ENCODE measurements at regions of chr14 and their contacts with region 1.

Region 1: GRCh38 chr14:103104654-103105452 is 10.3 kb downstream of the EXOC3L4 start:
- DNase-seq: peak; percentile 85 to 89
- H3K4me3 ChIP-seq: peak overlapping the region in 2 of 4 donors; percentile 7 to 49
- H3K27ac ChIP-seq: peak overlapping the region in 2 of 5 donors; percentile 31 to 33
- H3K4me1 ChIP-seq: peaks cover 55 to 69% (median 60%) of the 10 kb centered on the region in 4 donors
- H3K27me3 ChIP-seq: peaks cover 0 to 49% (median 28%) of the 10 kb centered on the region in 3 donors
- CTCF ChIP-seq: peak in 6 of 7 experiments; percentile 97 to 99 (median 98)
- EP300 ChIP-seq: no peak
- POLR2A ChIP-seq: no peak

Region 2: DNA sequence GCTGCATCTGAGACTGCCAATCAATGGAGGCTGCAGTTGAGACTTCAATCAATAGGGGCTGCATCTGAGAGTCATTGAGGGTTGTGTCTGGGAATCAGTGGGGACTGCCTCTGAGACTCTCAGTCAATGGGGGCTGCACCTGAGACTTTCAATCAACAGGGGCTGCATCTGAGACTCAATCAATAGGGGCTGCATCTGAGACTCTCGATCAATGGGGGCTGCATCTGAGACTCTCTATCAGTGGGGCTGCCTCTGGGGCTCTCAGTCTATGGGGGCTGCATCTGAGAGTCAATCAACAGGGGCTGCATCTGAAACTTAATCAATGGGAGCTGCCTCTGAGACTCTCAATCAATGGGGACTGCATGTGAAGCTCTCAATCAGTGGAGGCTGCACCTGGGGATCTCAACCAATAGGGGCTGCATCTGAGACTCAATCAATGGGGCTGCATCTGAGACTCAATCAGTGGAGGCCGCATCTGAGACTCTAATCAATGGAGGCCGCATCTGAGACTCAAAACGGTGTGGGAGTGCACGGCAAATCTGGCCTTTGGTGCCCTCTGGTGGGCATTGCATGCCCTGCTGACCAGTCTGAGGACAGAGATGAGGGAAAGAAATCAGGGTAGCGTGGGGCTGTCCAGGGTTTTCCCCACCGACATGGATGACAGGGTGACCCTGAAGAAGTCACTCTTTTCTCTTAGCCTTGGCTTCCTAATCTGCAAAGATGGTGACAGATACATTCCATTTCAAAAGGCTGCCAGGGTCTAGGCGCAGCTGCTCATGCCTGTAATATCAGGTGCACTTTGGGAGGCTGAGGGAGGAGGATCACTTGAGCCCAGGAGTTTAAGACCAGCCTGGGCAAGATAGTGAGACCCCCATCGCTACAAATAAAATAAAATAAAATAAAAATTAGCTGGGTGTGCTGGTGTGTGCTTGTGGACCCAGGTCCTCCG is 187.8 kb after region 1 on chr14:
- intact Hi-C with region 1: loop called (anchors 10 kb)
- DNase-seq: peak; percentile 84 to 90
- H3K4me3 ChIP-seq: no peak overlapping the region
- H3K27ac ChIP-seq: no peak overlapping the region
- H3K4me1 ChIP-seq: no peaks in the 10 kb centered on the region
- H3K27me3 ChIP-seq: peaks cover 0 to 44% (median 0%) of the 10 kb centered on the region in 3 donors
- CTCF ChIP-seq: peak in 5 of 7 experiments; percentile 80 to 95 (median 90)
- EP300 ChIP-seq: no peak
- POLR2A ChIP-seq: no peak

Measured in stomach (tissue), 19 donors.